Activated naive CD4-positive, alpha-beta T cell treated with anti-CD3 and anti-CD28 coated beads for 36 hours (primary cell): ENCODE measurements at regions of chr22 and their contacts with region 1.

Region 1: DNA sequence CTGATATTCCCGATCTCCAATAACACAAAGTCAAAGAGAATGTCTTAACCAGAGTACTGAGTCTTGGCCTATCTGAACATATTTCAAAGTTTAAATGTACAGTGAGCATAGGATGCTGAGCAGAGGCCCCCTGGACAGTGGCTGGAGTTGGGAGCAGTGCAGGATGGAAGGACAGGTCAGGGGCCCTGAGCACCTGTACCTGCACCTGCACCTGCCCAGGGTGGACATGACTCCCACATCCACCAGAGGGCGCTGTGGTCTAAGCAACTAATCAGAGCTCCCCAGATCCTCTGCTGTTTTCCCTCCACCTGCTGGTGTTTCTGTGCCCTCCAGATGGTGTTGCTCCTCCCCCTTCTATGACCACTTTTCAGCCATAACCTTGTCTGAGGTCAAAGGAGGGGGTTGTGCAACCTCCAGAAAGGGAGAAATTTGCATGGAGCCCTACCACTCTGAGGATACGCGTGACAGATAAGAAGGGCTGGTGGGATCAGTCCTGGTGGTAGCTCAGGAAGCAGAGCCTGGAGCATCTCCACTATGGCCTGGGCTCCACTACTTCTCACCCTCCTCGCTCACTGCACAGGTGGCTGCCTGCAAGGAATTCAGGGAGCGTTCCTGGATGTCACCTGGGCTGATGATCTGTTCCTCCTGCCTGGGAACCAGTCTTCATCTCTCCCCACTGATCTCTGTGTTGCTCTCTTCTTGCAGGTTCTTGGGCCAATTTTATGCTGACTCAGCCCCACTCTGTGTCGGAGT is 49.1 kb upstream of the VPREB1 start:
- DNase-seq: peak; percentile 92
- H3K4me3 Mint-ChIP-seq: no peak overlapping the region
- H3K27ac Mint-ChIP-seq: no peak overlapping the region
- H3K4me1 Mint-ChIP-seq: no peaks in the 10 kb centered on the region
- H3K27me3 Mint-ChIP-seq: peaks cover 3% of the 10 kb centered on the region

Region 2: DNA sequence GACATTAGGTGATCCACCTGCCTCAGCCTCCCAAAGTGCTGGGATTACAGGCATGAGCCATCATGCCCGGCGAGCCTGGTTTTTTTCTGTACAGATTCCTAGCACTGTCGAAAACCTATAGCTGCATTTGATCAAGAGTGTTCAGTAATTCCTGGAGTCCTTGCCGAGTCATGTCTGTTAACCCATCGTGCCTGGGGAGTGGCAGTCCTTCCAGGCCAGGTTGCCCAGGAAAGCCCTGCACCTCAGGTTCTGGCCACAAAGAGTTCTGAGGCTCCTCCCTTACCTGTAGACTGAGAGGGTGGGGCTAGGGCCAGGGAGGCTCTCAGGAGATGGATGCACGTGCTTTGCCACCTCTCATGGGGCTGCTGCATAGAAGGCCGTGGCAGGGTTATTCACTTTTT is 582.6 kb before region 1 on chr22:
- CTCF ChIA-PET with region 1: no interaction called
- intact Hi-C with region 1: loop called (anchors 10 kb)
- DNase-seq: no peak
- H3K4me3 Mint-ChIP-seq: no peak overlapping the region
- H3K27ac Mint-ChIP-seq: no peak overlapping the region
- H3K4me1 Mint-ChIP-seq: peaks cover 16% of the 10 kb centered on the region
- H3K27me3 Mint-ChIP-seq: no peaks in the 10 kb centered on the region

Region 3: GRCh38 chr22:22009661-22010060 is 185.8 kb before region 1 on chr22:
- CTCF ChIA-PET with region 1: no interaction called
- intact Hi-C with region 1: no loop called
- DNase-seq: no peak
- H3K4me3 Mint-ChIP-seq: no peak overlapping the region
- H3K27ac Mint-ChIP-seq: no peak overlapping the region
- H3K4me1 Mint-ChIP-seq: no peaks in the 10 kb centered on the region
- H3K27me3 Mint-ChIP-seq: peaks cover 13% of the 10 kb centered on the region

Region 4: DNA sequence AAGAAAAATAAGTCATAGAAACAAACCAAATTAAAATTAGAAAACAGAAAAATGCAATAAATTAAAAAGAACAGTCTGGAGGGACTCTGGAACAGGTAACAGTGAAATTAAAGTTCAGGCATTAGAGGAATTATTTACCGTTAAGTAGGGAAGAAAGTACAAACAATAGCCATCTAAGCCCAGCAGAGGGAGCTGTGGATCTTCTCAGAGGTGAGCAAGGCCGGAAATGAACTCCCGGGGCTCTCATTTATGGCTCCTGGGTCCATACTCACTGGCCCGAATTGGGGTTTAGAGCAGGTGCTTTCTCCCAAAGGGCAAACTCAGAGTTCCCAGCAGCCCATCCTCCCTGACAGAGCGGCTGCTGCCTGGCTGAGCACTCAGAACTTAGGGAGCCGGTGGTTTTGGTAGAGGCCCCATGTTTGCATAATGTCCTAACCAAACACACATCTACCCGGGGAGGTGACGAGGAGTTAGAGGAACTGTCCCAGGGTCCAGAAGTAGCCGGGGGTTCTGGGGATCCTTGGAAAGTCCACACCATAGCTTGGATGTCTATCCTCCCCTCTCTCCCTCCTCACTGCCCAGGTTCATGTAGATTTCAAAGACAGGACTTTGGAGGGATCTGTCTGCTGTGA is 38.6 kb before region 1 on chr22:
- CTCF ChIA-PET with region 1: interaction called, 8 read pairs
- intact Hi-C with region 1: loop called (anchors 1 kb)
- DNase-seq: peak; percentile 87
- H3K4me3 Mint-ChIP-seq: no peak overlapping the region
- H3K27ac Mint-ChIP-seq: peak overlapping the region; percentile 17
- H3K4me1 Mint-ChIP-seq: peaks cover 7% of the 10 kb centered on the region
- H3K27me3 Mint-ChIP-seq: peaks cover 3% of the 10 kb centered on the region

Region 5: DNA sequence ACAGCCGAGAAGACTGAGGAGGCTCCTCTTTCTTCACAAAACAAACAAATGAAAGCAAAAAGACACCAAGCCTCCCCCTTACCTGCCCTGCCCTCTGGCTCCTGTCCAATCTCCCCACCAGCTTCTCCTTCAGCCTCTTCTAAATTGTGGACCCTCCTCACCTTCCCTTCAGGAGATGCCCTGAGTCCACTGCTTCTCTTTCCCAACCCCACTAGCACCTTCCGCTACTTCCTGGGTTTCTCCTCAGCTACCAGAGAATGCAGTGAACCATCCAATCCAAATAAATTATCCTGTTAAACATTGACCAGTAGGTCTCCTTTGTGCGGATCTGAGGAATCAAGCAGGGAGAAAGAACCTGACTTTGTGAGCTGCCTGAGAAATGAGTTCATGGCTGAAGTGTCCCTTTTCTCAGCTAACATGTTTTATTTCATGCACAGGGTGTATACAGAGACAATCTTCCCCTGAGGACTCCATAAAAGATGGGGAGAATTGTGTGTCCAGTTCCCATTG is 14.0 kb before region 1 on chr22:
- CTCF ChIA-PET with region 1: interaction called, 35 read pairs
- intact Hi-C with region 1: no loop called
- DNase-seq: no peak
- H3K4me3 Mint-ChIP-seq: no peak overlapping the region
- H3K27ac Mint-ChIP-seq: no peak overlapping the region
- H3K4me1 Mint-ChIP-seq: no peaks in the 10 kb centered on the region
- H3K27me3 Mint-ChIP-seq: peaks cover 7% of the 10 kb centered on the region